ENCODE measurements at regions of chr9 and their contacts with region 1.

Region 1: DNA sequence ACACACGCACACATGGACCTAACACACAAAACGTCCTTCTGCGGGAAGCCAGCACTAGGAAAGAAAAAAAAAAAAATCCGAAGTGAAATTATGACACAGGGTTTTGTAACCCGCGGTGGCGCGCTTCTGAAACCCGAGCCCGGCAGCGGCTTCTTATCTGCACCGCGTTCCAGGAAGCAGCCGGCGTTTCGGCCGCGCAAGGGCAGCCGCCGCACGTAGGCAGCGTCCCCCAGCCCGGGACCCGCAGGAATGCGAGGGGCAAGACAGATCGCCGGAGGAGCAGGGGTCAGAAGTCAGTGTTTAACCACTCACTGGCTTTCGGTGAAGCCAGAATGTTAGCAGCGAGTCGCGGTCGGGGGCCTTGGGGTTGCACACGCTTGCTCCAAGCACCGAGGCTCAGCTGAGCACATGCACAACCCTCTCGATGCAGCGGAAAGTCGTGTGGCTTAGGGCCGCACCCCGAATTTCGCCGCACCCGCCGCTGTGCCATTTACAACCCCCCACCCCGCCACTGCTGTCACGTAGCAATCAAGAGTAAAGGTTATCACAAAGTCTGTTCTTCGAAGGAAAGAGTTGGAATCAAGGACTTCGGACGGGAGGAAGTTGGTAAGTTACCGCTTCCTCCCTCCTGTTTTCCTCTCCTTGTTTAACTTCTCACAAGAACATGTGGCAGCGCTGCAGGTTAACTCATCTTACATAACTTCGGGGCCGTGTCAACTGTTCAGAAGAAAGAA is 167.9 kb downstream of the AUH start:
- DNase-seq: peak; percentile 85 to 91
- H3K4me3 ChIP-seq: peak overlapping the region; percentile 41
- H3K4me3 Mint-ChIP-seq: peak overlapping the region; percentile 86
- H3K27ac Mint-ChIP-seq: peak overlapping the region; percentile 96
- H3K4me1 ChIP-seq: peaks cover 42% of the 10 kb centered on the region
- H3K4me1 Mint-ChIP-seq: no peaks in the 10 kb centered on the region
- H3K27me3 ChIP-seq: no peaks in the 10 kb centered on the region
- H3K27me3 Mint-ChIP-seq: no peaks in the 10 kb centered on the region
- CTCF ChIP-seq: no peak

Region 2: GRCh38 chr9:91036826-91037510 is 156.9 kb before region 1 on chr9:
- CTCF ChIA-PET with region 1: no interaction called
- POLR2A ChIA-PET with region 1: no interaction called
- intact Hi-C with region 1: loop called (anchors 10 kb)
- DNase-seq: peak; percentile 77 to 85
- H3K4me3 ChIP-seq: no peak overlapping the region
- H3K4me3 Mint-ChIP-seq: no peak overlapping the region
- H3K27ac Mint-ChIP-seq: peak overlapping the region; percentile 56
- H3K4me1 ChIP-seq: peaks cover 22% of the 10 kb centered on the region
- H3K4me1 Mint-ChIP-seq: peaks cover 17% of the 10 kb centered on the region
- H3K27me3 ChIP-seq: no peaks in the 10 kb centered on the region
- H3K27me3 Mint-ChIP-seq: no peaks in the 10 kb centered on the region
- CTCF ChIP-seq: peak; percentile 32 to 49

Region 3: GRCh38 chr9:91234510-91234909 is 40.7 kb after region 1 on chr9:
- CTCF ChIA-PET with region 1: no interaction called
- POLR2A ChIA-PET with region 1: no interaction called
- intact Hi-C with region 1: no loop called
- DNase-seq: no peak
- H3K4me3 ChIP-seq: no peak overlapping the region
- H3K4me3 Mint-ChIP-seq: no peak overlapping the region
- H3K27ac Mint-ChIP-seq: no peak overlapping the region
- H3K4me1 ChIP-seq: no peaks in the 10 kb centered on the region
- H3K4me1 Mint-ChIP-seq: no peaks in the 10 kb centered on the region
- H3K27me3 ChIP-seq: no peaks in the 10 kb centered on the region
- H3K27me3 Mint-ChIP-seq: no peaks in the 10 kb centered on the region
- CTCF ChIP-seq: no peak

Region 4: GRCh38 chr9:91361291-91362050 is 167.6 kb after region 1 on chr9 and contains the start of gene AUH:
- CTCF ChIA-PET with region 1: no interaction called
- POLR2A ChIA-PET with region 1: no interaction called
- intact Hi-C with region 1: loop called (anchors 5 kb)
- DNase-seq: peak; percentile 75 to 83
- H3K4me3 ChIP-seq: peak within 1 kb of the TSS; percentile 93
- H3K4me3 Mint-ChIP-seq: peak within 1 kb of the TSS; percentile 92
- H3K27ac Mint-ChIP-seq: peak within 1 kb of the TSS; percentile 91
- H3K4me1 ChIP-seq: peaks cover 5% of the 10 kb centered on the region; the same call in 1 of the 2 replicates
- H3K4me1 Mint-ChIP-seq: peaks cover 11% of the 10 kb centered on the region
- H3K27me3 ChIP-seq: no peaks in the 10 kb centered on the region
- H3K27me3 Mint-ChIP-seq: no peaks in the 10 kb centered on the region
- CTCF ChIP-seq: no peak
- total RNA-seq, gene AUH: 10.3 TPM in 2 replicates

Measured in Caco-2 (cell line).